Colonic mucosa (tissue), 4 donors: ENCODE measurements at regions of chr17 and their contacts with region 1.

Region 1: DNA sequence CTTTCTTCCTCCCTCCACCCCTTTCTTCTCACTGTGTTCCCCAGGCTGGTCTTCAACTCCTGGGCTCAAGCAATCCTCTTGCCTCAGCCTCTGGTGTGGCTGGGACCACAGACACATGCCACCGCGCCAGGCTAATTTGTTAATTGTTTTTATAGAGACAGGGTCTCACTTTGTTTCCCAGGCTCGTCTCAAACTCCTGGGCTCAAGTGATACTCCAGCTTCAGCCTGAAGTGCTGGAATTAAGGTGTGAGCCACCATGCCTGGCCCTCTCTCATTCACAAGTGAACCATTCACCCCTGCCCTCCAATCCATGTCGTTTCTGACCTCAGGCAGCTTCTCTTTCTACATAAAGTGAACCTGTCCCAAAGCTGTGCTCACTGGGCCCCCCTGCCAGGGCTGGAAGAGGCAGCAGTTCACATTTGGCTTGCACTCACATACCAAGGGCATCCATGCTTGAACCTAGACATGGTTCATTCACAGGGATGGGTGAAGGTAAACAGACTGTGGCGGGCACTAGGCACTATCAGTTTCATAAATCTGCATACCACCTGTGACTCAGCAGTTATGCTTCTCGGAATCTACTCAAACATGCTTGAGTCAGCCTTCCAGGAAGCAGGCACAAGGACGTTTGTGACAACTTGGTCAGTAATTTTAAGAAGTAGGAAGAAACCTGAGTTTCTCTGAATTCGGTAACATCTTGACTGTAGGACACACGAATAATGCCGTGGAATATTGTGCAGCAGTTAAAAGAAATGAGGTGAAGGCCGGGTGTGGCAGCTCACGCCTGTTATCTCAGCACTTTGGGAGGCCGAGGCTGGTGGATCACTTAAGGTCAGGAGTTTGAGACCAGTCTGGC is 6.0 kb upstream of the RNF213 start:
- DNase-seq: peak; percentile 79
- H3K4me3 ChIP-seq: no peak overlapping the region
- H3K27ac ChIP-seq: peak overlapping the region; percentile 73
- H3K4me1 ChIP-seq: peaks cover 11% of the 10 kb centered on the region
- H3K27me3 ChIP-seq: no peaks in the 10 kb centered on the region
- CTCF ChIP-seq: no peak

Region 2: GRCh38 chr17:80082403-80083135 is 172.1 kb before region 1 on chr17:
- intact Hi-C with region 1: loop called (anchors 5 kb)
- DNase-seq: peak; percentile 66
- H3K4me3 ChIP-seq: no peak overlapping the region
- H3K27ac ChIP-seq: no peak overlapping the region
- H3K4me1 ChIP-seq: no peaks in the 10 kb centered on the region
- H3K27me3 ChIP-seq: no peaks in the 10 kb centered on the region
- CTCF ChIP-seq: peak; percentile 72

Region 3: GRCh38 chr17:80147035-80147836 is 107.4 kb before region 1 on chr17 and contains the start of gene EIF4A3:
- intact Hi-C with region 1: loop called (anchors 10 kb)
- DNase-seq: peak; percentile 100
- H3K4me3 ChIP-seq: peak within 1 kb of the TSS; percentile 97
- H3K27ac ChIP-seq: peak within 1 kb of the TSS; percentile 92
- H3K4me1 ChIP-seq: peaks cover 7% of the 10 kb centered on the region
- H3K27me3 ChIP-seq: no peaks in the 10 kb centered on the region
- CTCF ChIP-seq: no peak
- total RNA-seq, gene EIF4A3: 99.8 to 114 TPM